Mammary epithelial cell (primary cell): ENCODE measurements at regions of chr16 and their contacts with region 1.

Region 1: GRCh38 chr16:1983544-1984346 is at the start of gene GFER:
- DNase-seq: peak; percentile 82
- H3K4me3 ChIP-seq: peak within 1 kb of the TSS; percentile 56 to 76 (median 69)
- H3K27ac ChIP-seq: no peak within 1 kb of the TSS
- H3K4me1 ChIP-seq: peaks cover 42% of the 10 kb centered on the region
- H3K27me3 ChIP-seq: no peaks in the 10 kb centered on the region
- CTCF ChIP-seq: peak in 1 of 2 donors; percentile 25
- total RNA-seq, gene GFER: 6.5 to 30.7 TPM

Region 2: GRCh38 chr16:1971796-1972489 is 11.8 kb before region 1 on chr16 and contains the start of gene TBL3:
- CTCF ChIA-PET with region 1: no interaction called
- dilution Hi-C with region 1: no loop called
- in situ Hi-C with region 1: no loop called
- intact Hi-C with region 1: loop called (anchors 1 kb)
- DNase-seq: peak; percentile 94
- H3K4me3 ChIP-seq: peak within 1 kb of the TSS; percentile 84 to 100 (median 99)
- H3K27ac ChIP-seq: peak within 1 kb of the TSS; percentile 68
- H3K4me1 ChIP-seq: peaks cover 10% of the 10 kb centered on the region
- H3K27me3 ChIP-seq: no peaks in the 10 kb centered on the region
- CTCF ChIP-seq: no peak
- total RNA-seq, gene TBL3: 33.2 to 46.5 TPM

Region 3: DNA sequence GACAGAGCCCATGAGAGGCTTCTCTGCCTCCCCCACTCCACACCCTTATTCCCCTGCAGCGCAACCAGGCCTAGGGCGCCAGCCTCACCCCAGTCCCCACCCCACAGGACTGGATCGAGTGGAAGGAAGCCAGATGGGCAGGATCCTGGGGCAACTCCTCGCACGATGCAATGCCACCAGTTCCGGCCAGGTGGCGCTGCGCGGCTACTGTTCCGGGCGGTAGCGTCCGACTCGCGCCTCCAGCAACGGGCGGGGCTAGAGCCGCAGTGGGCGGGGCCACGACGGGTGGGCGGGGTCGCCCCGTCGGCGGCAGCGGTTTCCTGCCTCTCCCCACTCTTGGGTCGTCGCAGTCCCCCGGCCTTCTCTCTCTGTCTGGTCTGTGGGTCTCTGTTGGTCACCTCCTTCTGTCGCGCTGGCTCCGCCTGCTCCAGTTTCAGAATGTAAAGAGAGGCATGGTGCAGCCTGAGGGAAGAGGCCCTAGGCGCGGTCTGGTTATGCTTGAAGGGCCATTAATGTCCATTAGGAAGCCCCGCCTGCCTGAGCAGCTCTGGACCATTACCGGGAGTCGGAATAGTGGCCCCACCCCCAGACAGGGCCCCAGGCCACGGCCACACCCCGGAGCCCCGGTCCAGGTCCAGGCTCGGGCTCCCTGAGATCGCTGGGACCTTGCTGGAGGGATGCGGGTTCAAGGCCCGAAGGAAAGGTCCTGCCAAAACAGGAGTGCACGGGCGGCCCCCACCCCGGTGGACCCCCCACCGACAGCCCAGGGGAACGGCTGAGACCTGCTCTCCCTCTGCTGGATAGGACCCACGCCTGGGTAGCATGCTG is 39.6 kb after region 1 on chr16:
- CTCF ChIA-PET with region 1: no interaction called
- dilution Hi-C with region 1: no loop called
- in situ Hi-C with region 1: no loop called
- intact Hi-C with region 1: no loop called
- DNase-seq: peak; percentile 74
- H3K4me3 ChIP-seq: peak overlapping the region in 1 of 3 experiments; percentile 28
- H3K27ac ChIP-seq: no peak overlapping the region
- H3K4me1 ChIP-seq: peaks cover 20% of the 10 kb centered on the region
- H3K27me3 ChIP-seq: peaks cover 11% of the 10 kb centered on the region
- CTCF ChIP-seq: peak; percentile 82 to 91

Region 4: GRCh38 chr16:2047330-2048115 is 63.8 kb after region 1 on chr16 and contains the starts of genes NTHL1 and TSC2:
- CTCF ChIA-PET with region 1: no interaction called
- dilution Hi-C with region 1: no loop called
- in situ Hi-C with region 1: no loop called
- intact Hi-C with region 1: no loop called
- DNase-seq: peak; percentile 93
- H3K4me3 ChIP-seq: peak within 1 kb of the TSS; percentile 63 to 90 (median 66)
- H3K27ac ChIP-seq: no peak within 1 kb of the TSS
- H3K4me1 ChIP-seq: peaks cover 19% of the 10 kb centered on the region
- H3K27me3 ChIP-seq: no peaks in the 10 kb centered on the region
- CTCF ChIP-seq: peak in 1 of 2 donors; percentile 48
- total RNA-seq, gene NTHL1: 11.3 to 23.2 TPM
- total RNA-seq, gene TSC2: 56.2 to 92.0 TPM